CD4-positive, alpha-beta T cell (primary cell): ENCODE measurements at regions of chr13 and their contacts with region 1.

Region 1: GRCh38 chr13:46126552-46127357 is 21.9 kb upstream of the CPB2 start:
- DNase-seq: peak; percentile 55 to 85 (median 70)
- ATAC-seq: peak; percentile 93
- H3K4me3 ChIP-seq: no peak overlapping the region
- H3K4me3 Mint-ChIP-seq: peak overlapping the region; percentile 40
- H3K27ac ChIP-seq: peak overlapping the region; percentile 37 to 52
- H3K27ac Mint-ChIP-seq: peak overlapping the region; percentile 87
- H3K4me1 ChIP-seq: peaks cover 26% of the 10 kb centered on the region
- H3K4me1 Mint-ChIP-seq: peaks cover 48% of the 10 kb centered on the region
- H3K27me3 ChIP-seq: no peaks in the 10 kb centered on the region
- H3K27me3 Mint-ChIP-seq: no peaks in the 10 kb centered on the region
- CTCF ChIP-seq: peak; percentile 75

Region 2: GRCh38 chr13:45511310-45512097 is 615.3 kb before region 1 on chr13:
- CTCF ChIA-PET with region 1: no interaction called
- POLR2A ChIA-PET with region 1: no interaction called
- intact Hi-C with region 1: loop called (anchors 1 to 5 kb)
- DNase-seq: peak in 8 of 14 experiments; percentile 2 to 83 (median 31)
- ATAC-seq: peak; percentile 91
- H3K4me3 ChIP-seq: no peak overlapping the region
- H3K4me3 Mint-ChIP-seq: no peak overlapping the region
- H3K27ac ChIP-seq: no peak overlapping the region
- H3K27ac Mint-ChIP-seq: peak overlapping the region; percentile 32
- H3K4me1 ChIP-seq: no peaks in the 10 kb centered on the region
- H3K4me1 Mint-ChIP-seq: peaks cover 16% of the 10 kb centered on the region
- H3K27me3 ChIP-seq: no peaks in the 10 kb centered on the region
- H3K27me3 Mint-ChIP-seq: no peaks in the 10 kb centered on the region
- CTCF ChIP-seq: peak; percentile 92

Region 3: GRCh38 chr13:45623515-45624090 is 503.2 kb before region 1 on chr13:
- CTCF ChIA-PET with region 1: no interaction called
- POLR2A ChIA-PET with region 1: no interaction called
- intact Hi-C with region 1: loop called (anchors 1 to 5 kb)
- DNase-seq: peak in 3 of 14 experiments; percentile 11 to 49 (median 41)
- ATAC-seq: no peak
- H3K4me3 ChIP-seq: no peak overlapping the region
- H3K4me3 Mint-ChIP-seq: no peak overlapping the region
- H3K27ac ChIP-seq: no peak overlapping the region
- H3K27ac Mint-ChIP-seq: no peak overlapping the region
- H3K4me1 ChIP-seq: peaks cover 9% of the 10 kb centered on the region
- H3K4me1 Mint-ChIP-seq: no peaks in the 10 kb centered on the region
- H3K27me3 ChIP-seq: peaks cover 14 to 24% of the 10 kb centered on the region in 2 experiments
- H3K27me3 Mint-ChIP-seq: peaks cover 48% of the 10 kb centered on the region
- CTCF ChIP-seq: peak; percentile 64

Region 4: DNA sequence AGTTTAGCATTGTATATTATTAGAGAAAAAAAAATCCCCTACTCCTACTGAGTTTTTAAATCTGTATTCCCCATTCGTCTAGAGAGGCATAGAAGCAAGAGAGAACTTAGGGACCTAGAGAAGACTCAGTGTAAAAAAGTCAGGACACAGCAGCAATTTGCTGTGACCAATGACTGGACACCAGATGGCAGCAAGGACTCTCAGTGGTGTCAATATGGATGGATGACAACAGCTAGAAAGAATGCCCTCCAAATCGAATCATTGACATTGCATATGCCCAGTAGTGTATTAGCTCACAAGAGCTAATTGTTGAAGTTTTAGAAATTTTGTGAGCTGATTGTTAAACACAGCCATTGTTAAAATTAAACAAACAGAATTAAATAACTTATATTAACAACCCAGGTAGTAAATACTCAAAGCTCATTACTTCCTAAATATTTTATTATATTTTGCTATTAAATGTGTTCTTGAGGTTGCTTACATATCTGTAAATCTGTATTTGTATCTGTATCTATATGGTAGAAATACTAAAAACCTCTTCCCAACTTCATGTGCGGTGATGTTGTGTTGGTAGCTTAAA is 319.1 kb before region 1 on chr13:
- CTCF ChIA-PET with region 1: no interaction called
- POLR2A ChIA-PET with region 1: interaction called, 3 read pairs
- intact Hi-C with region 1: loop called in 1 of 2 experiments (anchors 5 kb)
- DNase-seq: peak in 8 of 14 experiments; percentile 3 to 58 (median 21)
- ATAC-seq: no peak
- H3K4me3 ChIP-seq: no peak overlapping the region
- H3K4me3 Mint-ChIP-seq: no peak overlapping the region
- H3K27ac ChIP-seq: no peak overlapping the region
- H3K27ac Mint-ChIP-seq: no peak overlapping the region
- H3K4me1 ChIP-seq: peaks cover 4% of the 10 kb centered on the region
- H3K4me1 Mint-ChIP-seq: no peaks in the 10 kb centered on the region
- H3K27me3 ChIP-seq: no peaks in the 10 kb centered on the region
- H3K27me3 Mint-ChIP-seq: no peaks in the 10 kb centered on the region
- CTCF ChIP-seq: peak; percentile 58

Region 5: GRCh38 chr13:45847554-45848224 is 279.1 kb before region 1 on chr13:
- CTCF ChIA-PET with region 1: no interaction called
- POLR2A ChIA-PET with region 1: no interaction called
- intact Hi-C with region 1: loop called in 1 of 2 experiments (anchors 10 kb)
- DNase-seq: peak; percentile 28 to 79 (median 52)
- ATAC-seq: peak; percentile 80
- H3K4me3 ChIP-seq: peak overlapping the region; percentile 8
- H3K4me3 Mint-ChIP-seq: peak overlapping the region; percentile 88
- H3K27ac ChIP-seq: no peak overlapping the region
- H3K27ac Mint-ChIP-seq: peak overlapping the region; percentile 86
- H3K4me1 ChIP-seq: peaks cover 44% of the 10 kb centered on the region
- H3K4me1 Mint-ChIP-seq: peaks cover 62% of the 10 kb centered on the region
- H3K27me3 ChIP-seq: no peaks in the 10 kb centered on the region
- H3K27me3 Mint-ChIP-seq: no peaks in the 10 kb centered on the region
- CTCF ChIP-seq: no peak

Region 6: DNA sequence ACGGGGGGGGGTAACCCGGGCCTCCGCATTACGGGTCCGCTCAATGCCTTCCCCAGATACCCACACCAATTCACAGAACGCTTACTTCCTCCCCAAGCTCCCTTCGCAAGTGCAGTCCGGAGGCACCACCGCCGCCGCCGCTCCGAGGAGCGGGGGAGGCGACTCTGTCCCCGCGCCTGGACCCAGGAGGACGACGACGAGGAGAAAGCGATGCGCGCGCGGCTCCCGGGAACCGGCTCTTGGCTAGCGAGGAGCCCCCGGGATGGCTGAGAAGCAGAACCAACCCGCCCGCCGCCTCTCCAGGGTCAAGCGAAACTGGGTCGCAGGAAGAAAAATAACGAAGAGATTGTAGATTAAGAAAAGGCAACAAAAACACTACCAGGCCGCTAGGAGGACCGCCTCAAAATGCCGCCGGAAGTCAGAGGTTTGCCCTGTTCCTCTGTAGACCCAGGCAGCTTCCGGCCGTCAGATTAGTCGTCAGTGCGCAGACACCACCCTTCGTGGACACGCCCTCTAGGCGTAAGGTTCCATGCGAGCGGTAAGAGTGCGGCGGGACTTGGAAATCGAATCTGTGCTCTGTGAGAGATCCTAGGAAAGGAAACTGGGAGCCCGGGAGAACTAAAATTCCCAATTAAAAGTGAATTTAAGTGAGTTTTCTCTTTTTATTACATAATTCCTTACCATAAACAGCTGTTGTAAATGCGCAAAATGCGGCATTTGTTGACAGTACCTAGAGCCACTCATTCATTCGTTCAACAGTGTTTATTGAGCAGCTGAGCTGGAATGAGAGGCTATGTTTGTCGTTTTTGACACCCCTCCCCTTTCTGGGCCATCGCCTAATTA is 74.2 kb before region 1 on chr13 and contains the start of gene ZC3H13:
- CTCF ChIA-PET with region 1: interaction called, 7 read pairs
- POLR2A ChIA-PET with region 1: interaction called, 18 read pairs
- intact Hi-C with region 1: loop called (anchors 1 to 5 kb)
- DNase-seq: peak; percentile 87 to 98 (median 89)
- ATAC-seq: peak; percentile 96
- H3K4me3 ChIP-seq: peak within 1 kb of the TSS; percentile 84
- H3K4me3 Mint-ChIP-seq: peak within 1 kb of the TSS; percentile 91
- H3K27ac ChIP-seq: peak within 1 kb of the TSS; percentile 97
- H3K27ac Mint-ChIP-seq: peak within 1 kb of the TSS; percentile 86
- H3K4me1 ChIP-seq: peaks cover 2% of the 10 kb centered on the region
- H3K4me1 Mint-ChIP-seq: peaks cover 53% of the 10 kb centered on the region
- H3K27me3 ChIP-seq: peaks cover 0 to 10% of the 10 kb centered on the region in 2 experiments
- H3K27me3 Mint-ChIP-seq: peaks cover 22% of the 10 kb centered on the region
- CTCF ChIP-seq: peak; percentile 48
- total RNA-seq, gene ZC3H13: 36.5 to 43.8 TPM

Region 7: DNA sequence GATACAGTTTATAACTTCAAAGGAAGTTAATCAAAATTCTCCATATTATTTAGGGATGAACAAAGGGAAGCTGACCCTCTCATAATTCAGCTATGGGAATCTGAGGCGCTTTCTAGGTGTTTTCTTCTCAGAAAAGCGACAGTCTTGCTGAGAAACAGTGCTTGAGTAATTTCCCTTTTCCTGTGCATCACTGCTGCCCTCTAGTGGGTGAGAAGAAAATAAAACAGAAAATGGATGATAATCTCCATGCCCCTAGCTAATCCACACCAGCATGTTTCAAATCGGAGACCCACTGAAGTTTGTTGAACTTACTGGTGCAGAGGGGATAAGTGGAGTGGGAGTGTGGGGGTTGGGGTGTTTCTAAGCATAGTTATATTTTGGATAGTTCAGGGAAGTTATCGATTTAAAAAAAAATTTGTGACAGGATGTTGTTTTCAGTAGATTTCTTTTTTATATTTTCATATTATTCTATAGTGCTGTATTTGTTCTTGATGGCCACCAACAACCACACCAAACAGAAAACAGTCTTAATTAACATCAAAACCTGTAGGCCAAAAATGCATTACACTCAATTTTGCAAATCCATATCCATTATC is 33.8 kb after region 1 on chr13:
- CTCF ChIA-PET with region 1: interaction called, 22 read pairs
- POLR2A ChIA-PET with region 1: no interaction called
- intact Hi-C with region 1: no loop called
- DNase-seq: peak in 7 of 14 experiments; percentile 19 to 91 (median 51)
- ATAC-seq: peak; percentile 83
- H3K4me3 ChIP-seq: no peak overlapping the region
- H3K4me3 Mint-ChIP-seq: peak overlapping the region; percentile 83
- H3K27ac ChIP-seq: peak overlapping the region; percentile 62 to 69
- H3K27ac Mint-ChIP-seq: peak overlapping the region; percentile 91
- H3K4me1 ChIP-seq: peaks cover 32% of the 10 kb centered on the region
- H3K4me1 Mint-ChIP-seq: peaks cover 57% of the 10 kb centered on the region
- H3K27me3 ChIP-seq: no peaks in the 10 kb centered on the region
- H3K27me3 Mint-ChIP-seq: no peaks in the 10 kb centered on the region
- CTCF ChIP-seq: peak; percentile 89